ENCODE measurements at regions of chr1 and their contacts with region 1.

Region 1: GRCh38 chr1:32072622-32073298 is at the start of gene TMEM39B:
- DNase-seq: peak; percentile 96
- H3K4me3 Mint-ChIP-seq: peak within 1 kb of the TSS; percentile 77
- H3K27ac Mint-ChIP-seq: peak within 1 kb of the TSS; percentile 83
- H3K4me1 Mint-ChIP-seq: peaks cover 46% of the 10 kb centered on the region
- H3K27me3 Mint-ChIP-seq: no peaks in the 10 kb centered on the region
- total RNA-seq, gene TMEM39B: 24.5 to 28.0 TPM

Region 2: DNA sequence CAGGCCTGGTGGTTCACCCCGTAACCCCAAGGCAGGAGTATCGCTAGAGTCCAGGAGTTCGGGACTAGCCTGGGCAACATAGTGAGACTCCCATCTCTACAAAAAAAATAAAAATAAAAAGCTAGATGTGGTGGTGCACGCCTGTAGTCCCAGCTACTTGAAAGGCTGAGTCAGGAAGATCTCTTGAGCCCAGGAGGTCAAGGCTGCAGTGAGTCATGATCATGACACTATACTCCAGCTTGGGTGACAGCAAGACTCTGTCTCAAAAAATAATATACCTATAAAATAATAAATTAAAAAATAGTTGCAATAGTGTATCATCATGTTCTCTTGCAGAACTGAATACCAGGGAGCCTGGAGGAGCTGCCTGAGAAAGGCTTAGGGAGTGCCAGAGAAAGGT is 19.9 kb before region 1 on chr1:
- CTCF ChIA-PET with region 1: interaction called, 6 read pairs
- POLR2A ChIA-PET with region 1: interaction called, 11 read pairs
- DNase-seq: no peak
- H3K4me3 Mint-ChIP-seq: no peak overlapping the region
- H3K27ac Mint-ChIP-seq: no peak overlapping the region
- H3K4me1 Mint-ChIP-seq: peaks cover 2% of the 10 kb centered on the region
- H3K27me3 Mint-ChIP-seq: no peaks in the 10 kb centered on the region

Region 3: GRCh38 chr1:32413507-32414185 is 340.9 kb after region 1 on chr1:
- CTCF ChIA-PET with region 1: no interaction called
- POLR2A ChIA-PET with region 1: no interaction called
- DNase-seq: peak; percentile 77
- H3K4me3 Mint-ChIP-seq: no peak overlapping the region
- H3K27ac Mint-ChIP-seq: no peak overlapping the region
- H3K4me1 Mint-ChIP-seq: peaks cover 3% of the 10 kb centered on the region
- H3K27me3 Mint-ChIP-seq: peaks cover 25% of the 10 kb centered on the region